GM10248 (cell line): ENCODE measurements at regions of chr5 and their contacts with region 1.

Region 1: GRCh38 chr5:139272471-139273321 is 20.8 kb upstream of the MATR3 start:
- DNase-seq: no peak
- CTCF ChIP-seq: no peak

Region 2: GRCh38 chr5:138491669-138492559 is 780.8 kb before region 1 on chr5:
- CTCF ChIA-PET with region 1: no interaction called
- POLR2A ChIA-PET with region 1: interaction called, 10 read pairs
- DNase-seq: peak; percentile 96
- CTCF ChIP-seq: no peak

Region 3: GRCh38 chr5:139251281-139251687 is 21.4 kb before region 1 on chr5:
- CTCF ChIA-PET with region 1: interaction called, 21 read pairs
- POLR2A ChIA-PET with region 1: interaction called, 3 read pairs
- DNase-seq: peak; percentile 78
- CTCF ChIP-seq: peak; percentile 64

Region 4: DNA sequence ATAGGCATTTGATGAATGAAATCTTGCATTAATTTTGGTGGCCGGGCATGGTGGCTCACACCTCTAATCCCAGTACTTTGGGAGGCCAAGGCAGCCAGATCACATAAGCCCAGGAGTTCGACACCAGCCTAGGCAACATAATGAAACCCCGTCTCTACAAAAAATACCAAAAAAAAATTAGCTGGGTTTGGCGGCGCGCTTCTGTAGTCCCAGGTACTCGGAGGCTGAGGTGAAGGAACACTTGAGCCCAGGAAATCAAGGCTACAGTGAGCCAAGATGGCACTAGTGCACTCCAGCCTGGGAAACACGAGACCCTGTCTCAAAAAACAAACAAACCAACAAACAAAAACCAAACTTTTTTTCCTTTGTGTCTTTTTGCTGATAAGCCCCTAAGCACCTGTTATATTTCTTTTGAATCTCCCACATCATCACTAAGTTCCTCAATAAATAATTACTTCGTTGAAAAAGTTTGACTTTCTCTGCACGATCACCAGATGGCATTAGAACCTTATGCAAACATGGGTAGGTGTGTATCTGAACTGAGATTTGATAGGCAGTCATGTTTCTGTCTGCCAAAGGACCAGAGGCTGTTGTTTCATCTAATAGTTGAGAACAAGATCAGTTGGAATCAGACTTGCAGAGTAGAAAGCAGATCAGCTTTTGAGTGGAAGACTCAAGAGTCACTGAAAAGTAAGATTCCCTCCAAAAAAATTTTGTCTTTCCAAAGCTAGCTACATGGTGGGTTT is 15.4 kb after region 1 on chr5:
- CTCF ChIA-PET with region 1: interaction called, 15 read pairs
- POLR2A ChIA-PET with region 1: interaction called, 13 read pairs
- DNase-seq: no peak
- CTCF ChIP-seq: peak; percentile 10

Region 5: DNA sequence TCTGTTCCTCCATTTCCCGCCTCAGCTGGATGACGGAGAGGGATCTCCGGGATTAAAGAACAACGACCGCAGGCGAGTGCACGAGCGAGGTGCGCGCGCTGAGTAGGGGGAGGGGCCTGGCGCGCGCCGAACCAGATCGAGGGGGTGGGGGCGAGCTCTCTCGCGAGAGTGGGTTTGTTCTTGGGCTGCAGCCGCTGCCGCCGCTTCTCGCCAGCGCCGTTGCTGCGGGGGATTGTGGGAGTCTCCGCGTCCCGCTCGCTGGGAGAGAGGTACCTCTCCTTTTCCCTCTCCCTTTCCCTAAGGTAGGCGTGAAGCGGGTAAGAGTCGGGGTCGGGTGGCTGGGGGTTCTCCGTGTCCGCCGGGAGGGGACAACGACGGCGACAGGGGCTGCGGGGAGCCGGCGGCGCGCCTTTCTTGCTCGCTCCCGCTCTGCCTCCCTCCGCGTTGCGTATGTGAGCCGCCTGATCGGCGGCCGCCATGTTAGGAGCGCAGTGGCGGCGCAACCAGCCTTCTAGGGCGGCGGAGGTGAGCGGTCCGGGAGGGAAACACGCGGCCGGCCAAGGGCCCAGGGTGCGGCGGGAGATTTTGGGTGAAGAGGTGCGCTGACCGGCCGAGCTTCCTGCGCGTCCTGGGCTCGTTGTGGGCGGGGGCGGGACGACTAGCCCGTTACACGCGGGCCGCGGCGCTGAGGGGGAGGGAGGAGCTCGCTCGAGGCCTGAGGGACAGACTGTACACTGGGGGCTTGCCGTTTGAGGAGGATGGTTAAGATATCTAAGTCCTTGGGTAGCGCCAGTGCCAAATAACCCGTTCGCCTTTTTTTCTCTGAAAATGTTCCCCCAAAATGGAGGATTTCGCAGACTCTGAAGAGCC is 21.0 kb after region 1 on chr5 and contains the start of gene MATR3:
- CTCF ChIA-PET with region 1: interaction called, 15 read pairs
- POLR2A ChIA-PET with region 1: interaction called, 13 read pairs
- DNase-seq: peak; percentile 94
- CTCF ChIP-seq: no peak

Region 6: DNA sequence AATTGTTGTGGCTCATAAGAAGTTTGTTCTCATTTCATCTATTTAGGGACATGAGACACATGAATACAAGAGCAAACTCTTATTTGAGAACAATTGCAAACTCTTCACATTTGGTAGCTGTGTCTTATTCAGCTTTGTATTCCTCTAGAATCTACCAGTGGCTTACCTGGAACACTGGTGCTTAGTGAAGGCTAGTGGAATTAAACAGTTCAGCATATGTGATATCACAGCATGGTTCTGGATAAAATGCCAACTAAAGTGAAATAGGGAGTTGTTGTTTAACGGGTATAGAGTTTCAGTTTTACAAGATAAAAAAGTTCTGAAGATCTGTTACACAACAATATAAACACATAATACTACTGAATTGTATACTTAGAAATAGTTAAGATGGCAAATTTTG is 721.5 kb after region 1 on chr5:
- CTCF ChIA-PET with region 1: no interaction called
- POLR2A ChIA-PET with region 1: no interaction called
- DNase-seq: no peak
- CTCF ChIP-seq: no peak